Ascending aorta (tissue), 2 donors: ENCODE measurements at regions of chr9 and their contacts with region 1.

Region 1: GRCh38 chr9:121640076-121640475 is 11.4 kb upstream of the DAB2IP start:
- DNase-seq: no peak
- H3K4me3 ChIP-seq: no peak overlapping the region
- H3K27ac ChIP-seq: no peak overlapping the region
- H3K4me1 ChIP-seq: peaks cover 0 to 16% of the 10 kb centered on the region in 2 donors
- H3K27me3 ChIP-seq: no peaks in the 10 kb centered on the region
- CTCF ChIP-seq: peak; percentile 12 to 57 (median 33)

Region 2: DNA sequence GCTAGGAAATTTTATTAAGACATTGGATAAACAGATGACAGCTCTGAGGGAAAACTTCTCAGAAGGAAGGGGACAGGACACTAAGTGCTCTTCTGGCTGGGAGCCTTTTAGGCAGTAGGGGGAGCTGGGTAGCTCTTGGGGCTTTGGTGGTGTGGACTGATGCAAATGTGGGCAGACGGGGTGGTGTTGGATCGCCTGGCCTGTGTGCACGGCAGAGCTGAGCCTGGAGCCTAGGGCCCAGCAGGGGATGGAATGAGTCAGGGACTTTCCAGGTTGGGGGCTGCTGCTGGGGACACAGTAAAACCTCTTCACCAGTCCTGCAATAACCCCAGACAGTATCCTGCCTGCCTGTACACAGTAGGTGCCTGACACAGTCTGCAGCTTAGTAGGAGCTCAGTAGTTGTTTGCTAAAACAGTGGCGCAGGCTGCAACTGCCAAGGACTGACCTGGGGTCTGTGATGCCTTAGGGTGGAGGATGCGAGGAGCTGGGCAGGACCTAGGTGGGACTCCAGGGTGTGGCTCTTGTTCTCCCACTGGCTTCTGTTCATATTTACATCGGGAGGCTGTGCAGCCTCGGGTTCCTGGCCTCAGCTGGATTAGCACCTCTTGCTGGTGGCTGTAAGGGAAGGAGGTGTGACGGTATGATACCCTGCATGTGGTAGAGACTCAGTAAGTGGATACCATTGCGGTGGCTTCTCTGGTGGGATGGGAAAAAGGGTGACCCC is 95.2 kb after region 1 on chr9:
- intact Hi-C with region 1: no loop called
- DNase-seq: no peak
- H3K4me3 ChIP-seq: peak overlapping the region; percentile 45 to 66
- H3K27ac ChIP-seq: peak overlapping the region; percentile 91 to 94
- H3K4me1 ChIP-seq: peaks cover 39 to 62% of the 10 kb centered on the region in 2 donors
- H3K27me3 ChIP-seq: no peaks in the 10 kb centered on the region
- CTCF ChIP-seq: peak in 2 of 3 experiments; percentile 17 to 45

Region 3: DNA sequence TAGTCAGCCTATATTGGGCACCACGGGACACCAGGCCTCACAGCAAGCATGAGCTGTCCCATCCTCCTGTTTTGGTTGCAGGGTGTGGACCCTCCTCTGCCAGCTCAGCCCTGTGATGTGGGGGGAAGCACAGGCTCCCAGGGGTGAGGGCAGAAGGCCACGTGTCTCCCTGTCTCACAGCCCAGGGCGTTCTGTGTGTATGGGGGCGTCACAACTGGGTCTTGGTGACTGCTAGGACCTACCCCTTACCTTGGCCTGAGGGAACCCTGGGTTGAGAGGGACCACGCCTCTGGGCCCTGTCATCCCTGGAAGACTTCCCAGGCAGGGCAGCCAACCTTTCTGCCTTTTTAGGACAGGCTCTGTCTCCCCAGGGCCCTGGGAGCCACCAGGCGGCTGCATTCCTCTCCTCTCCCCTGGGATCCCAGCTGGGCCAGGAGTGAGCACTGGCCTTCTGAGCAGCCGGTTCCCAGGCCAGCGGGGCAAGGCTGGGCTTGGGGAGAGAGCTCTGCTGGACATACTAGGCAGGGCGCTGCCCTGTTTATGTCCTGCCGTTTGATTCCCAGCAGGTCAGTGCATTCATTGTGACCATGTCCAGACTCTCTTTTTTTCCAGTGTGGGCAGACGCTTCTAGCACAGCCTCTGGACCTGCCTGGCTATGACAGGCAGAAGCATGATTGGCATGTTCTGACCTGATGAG is 108.8 kb after region 1 on chr9:
- intact Hi-C with region 1: no loop called
- DNase-seq: peak; percentile 51 to 88
- H3K4me3 ChIP-seq: peak overlapping the region in 1 of 2 donors; percentile 3
- H3K27ac ChIP-seq: peak overlapping the region; percentile 94 to 96
- H3K4me1 ChIP-seq: peaks cover 45 to 85% of the 10 kb centered on the region in 2 donors
- H3K27me3 ChIP-seq: no peaks in the 10 kb centered on the region
- CTCF ChIP-seq: peak in 1 of 3 experiments; percentile 9

Region 4: DNA sequence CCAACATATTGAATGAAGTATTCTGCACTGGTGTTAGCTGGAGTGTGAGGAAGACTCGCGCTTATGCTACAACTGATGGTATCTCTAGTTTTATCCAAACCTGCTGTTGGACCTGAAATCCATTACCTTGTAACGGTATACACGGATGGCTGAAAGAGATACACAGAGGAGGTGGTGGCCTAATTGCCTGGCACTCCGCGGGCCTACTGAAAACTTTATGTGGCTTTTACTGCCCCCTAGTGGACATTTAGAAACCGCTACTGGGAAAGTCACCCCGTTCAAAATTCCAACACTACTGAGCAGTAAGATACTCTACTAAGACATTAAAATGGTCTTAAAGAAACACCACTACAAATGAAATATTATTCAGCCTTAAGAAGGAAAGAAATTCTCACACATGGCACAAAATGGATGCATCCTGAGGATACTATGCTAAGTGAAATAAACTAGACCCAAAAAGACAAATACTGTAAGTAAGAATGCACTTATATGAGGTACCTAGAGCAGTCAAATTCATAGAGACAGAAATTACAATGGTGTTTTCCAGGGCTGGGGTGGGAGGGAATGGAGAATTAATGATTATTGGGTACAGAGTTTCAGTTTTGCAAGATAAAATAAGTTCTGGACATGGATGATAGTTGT is 352.6 kb after region 1 on chr9:
- intact Hi-C with region 1: loop called (anchors 5 kb)
- DNase-seq: peak in 1 of 2 donors; percentile 76
- H3K4me3 ChIP-seq: no peak overlapping the region
- H3K27ac ChIP-seq: no peak overlapping the region
- H3K4me1 ChIP-seq: peaks cover 0 to 1% of the 10 kb centered on the region in 2 donors
- H3K27me3 ChIP-seq: no peaks in the 10 kb centered on the region
- CTCF ChIP-seq: peak; percentile 75 to 79 (median 78)